ENCODE measurements at regions of chr21 and their contacts with region 1.

Region 1: DNA sequence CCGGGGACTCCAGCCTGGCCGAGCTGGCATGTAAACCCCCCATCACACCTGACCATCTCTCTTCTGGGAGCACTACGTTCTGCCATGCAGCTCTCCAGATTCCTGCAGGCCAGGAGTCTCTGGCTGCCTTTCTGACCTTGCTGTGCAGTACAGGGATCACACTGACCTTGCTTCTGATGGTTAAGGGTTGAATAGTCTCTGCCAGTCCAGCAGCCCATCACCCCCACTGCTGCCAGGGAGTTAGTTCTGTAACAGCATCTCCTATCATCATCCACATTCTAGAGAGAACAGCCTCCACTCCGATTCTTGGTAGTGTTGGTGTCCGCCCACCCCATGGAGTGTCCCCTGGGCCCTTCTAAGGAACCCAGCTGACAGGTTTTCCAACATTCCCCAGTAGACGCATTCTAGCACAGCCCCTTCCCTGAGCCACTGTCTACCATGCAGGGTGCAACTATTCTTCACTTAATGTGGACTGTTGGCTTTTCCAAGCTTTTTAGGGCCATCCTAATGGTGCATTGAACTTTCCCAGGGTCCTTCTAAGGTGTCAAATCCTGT is 109.8 kb downstream of the RIPK4 start:
- DNase-seq: no peak
- H3K4me3 ChIP-seq: no peak overlapping the region
- H3K27ac ChIP-seq: no peak overlapping the region
- H3K4me1 ChIP-seq: no peaks in the 10 kb centered on the region
- H3K27me3 ChIP-seq: no peaks in the 10 kb centered on the region
- CTCF ChIP-seq: no peak
- POLR2A ChIP-seq: no peak

Region 2: DNA sequence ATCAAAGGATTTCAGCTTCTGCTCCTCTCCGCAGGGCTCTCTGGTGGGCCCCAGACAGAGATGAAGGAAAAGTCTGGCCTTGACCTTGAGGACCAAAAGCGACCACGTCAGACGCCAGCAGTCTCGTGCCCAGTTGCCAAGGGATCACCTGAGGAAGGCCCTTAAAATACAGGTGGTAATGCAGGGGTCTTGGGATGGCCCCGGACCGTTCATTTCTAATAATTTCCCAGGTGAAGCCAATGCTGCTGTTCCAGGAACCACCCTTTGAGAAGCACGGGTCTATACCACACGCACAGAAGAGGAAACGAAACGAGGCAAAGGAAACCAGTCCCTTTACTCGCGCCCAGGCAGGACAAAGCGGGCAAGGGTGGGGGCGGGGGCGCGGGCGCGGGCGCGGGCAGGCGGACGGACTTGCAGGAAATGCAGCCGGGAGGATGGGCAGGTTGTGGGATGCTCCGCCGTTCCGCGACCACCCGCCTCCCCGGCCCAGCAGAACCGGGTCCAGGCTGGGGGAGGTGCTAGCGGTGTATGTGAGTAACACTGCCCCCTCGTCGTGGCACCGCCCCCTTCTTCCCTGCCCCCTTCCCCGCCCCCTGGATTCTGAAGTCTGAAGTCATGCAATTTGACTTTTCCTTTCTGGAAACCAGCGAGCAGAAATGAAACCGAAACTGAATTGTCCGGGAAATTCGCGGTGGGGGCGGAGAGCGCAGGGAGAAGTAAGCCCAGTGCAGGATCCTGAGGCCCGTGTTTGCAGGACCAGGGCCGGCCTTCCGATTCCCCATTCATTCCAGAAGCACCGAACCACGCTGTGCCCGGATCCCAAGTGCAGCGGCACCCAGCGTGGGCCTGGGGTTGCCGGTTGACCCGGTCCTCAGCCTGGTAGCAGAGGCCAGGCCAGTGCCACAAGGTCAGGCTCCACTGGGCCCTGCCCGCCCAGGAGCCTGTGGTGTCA is 236.9 kb before region 1 on chr21:
- intact Hi-C with region 1: no loop called
- DNase-seq: peak; percentile 72 to 81
- H3K4me3 ChIP-seq: peak overlapping the region; percentile 65 to 86 (median 67)
- H3K27ac ChIP-seq: peak overlapping the region; percentile 86 to 96
- H3K4me1 ChIP-seq: no peaks in the 10 kb centered on the region
- H3K27me3 ChIP-seq: no peaks in the 10 kb centered on the region
- CTCF ChIP-seq: no peak
- POLR2A ChIP-seq: no peak

Region 3: DNA sequence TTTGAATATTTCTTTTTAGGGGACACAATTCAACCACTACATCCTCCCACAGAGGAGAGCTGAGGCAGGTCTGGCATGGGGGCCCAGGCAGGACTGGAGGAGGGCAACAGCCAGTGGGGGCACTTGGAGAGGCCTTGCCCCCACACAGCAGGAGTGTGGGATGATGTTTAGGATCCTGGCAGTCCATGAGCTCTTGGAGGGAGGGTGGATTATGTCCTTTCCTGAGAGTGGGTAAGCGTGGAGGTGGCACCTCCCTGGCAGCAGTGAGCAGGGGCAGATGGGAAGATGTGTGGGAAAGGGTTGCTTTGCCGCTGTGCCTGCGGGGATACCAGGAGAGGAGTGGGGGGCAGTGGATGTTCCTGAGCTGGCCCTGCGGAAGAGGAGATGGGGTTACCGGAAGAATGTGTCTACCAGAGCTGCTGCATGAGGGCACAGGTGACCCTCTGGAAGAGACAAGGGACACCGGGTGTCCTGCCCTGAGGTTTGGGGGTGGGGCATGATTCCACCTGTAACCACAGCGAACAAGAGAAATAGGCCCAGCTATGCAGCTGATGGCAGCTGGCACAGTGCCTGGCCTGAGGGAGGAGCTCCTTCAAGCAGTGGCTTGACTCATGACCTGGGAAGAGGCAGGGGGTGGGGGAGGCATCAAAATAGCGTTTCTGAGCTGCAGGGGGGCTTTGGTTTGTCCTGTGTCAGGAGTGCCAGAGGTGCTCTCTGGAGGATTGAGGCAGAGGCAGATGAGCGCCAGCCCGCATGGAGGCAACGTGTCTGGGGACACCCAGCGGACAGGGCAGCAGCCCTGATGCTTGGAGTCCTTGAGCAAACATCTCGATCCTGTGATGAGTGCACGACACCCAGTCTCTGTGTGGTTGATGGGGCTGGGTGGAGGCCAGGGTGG is 25.2 kb before region 1 on chr21:
- intact Hi-C with region 1: loop called (anchors 1 kb)
- DNase-seq: peak in 1 of 2 donors; percentile 82
- H3K4me3 ChIP-seq: no peak overlapping the region
- H3K27ac ChIP-seq: peak overlapping the region; percentile 40 to 48
- H3K4me1 ChIP-seq: peaks cover 0 to 3% of the 10 kb centered on the region in 2 donors
- H3K27me3 ChIP-seq: no peaks in the 10 kb centered on the region
- CTCF ChIP-seq: no peak
- POLR2A ChIP-seq: no peak

Region 4: DNA sequence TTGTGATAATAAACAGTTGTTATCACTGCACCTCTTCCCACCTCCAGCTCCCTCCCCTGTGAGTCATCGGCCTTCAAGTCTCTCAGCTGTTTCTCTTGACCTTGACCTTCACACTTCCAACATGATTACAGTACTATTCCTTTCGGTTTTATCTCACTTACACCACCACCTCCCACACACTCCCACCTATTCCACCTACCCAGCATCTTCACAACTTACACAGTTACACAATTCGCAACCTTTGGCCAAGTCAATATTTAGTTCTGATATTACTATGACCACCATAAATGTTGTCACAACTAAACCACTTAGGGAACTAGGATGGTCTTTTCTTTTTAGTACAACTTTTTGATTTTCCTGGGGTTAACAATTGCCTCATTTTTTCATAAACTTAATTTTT is 49.6 kb after region 1 on chr21:
- intact Hi-C with region 1: no loop called
- DNase-seq: no peak
- H3K4me3 ChIP-seq: no peak overlapping the region
- H3K27ac ChIP-seq: peak overlapping the region; percentile 22 to 88
- H3K4me1 ChIP-seq: peaks cover 0 to 6% of the 10 kb centered on the region in 2 donors
- H3K27me3 ChIP-seq: no peaks in the 10 kb centered on the region
- CTCF ChIP-seq: no peak
- POLR2A ChIP-seq: no peak